OCI-LY7 (cell line): ENCODE measurements at regions of chr14 and their contacts with region 1.

Region 1: GRCh38 chr14:24160850-24161804 is at the start of gene IRF9:
- DNase-seq: peak; percentile 95
- H3K4me3 ChIP-seq: peak within 1 kb of the TSS; percentile 70
- H3K27ac ChIP-seq: peak within 1 kb of the TSS; percentile 68
- H3K4me1 ChIP-seq: peaks cover 16% of the 10 kb centered on the region
- CTCF ChIP-seq: peak; percentile 95
- total RNA-seq, gene IRF9: 35.1 and 40.7 TPM in 2 replicates

Region 2: GRCh38 chr14:24013654-24014514 is 147.2 kb before region 1 on chr14:
- CTCF ChIA-PET with region 1: no interaction called
- POLR2A ChIA-PET with region 1: no interaction called
- intact Hi-C with region 1: loop called (anchors 1 kb)
- DNase-seq: peak; percentile 82
- H3K4me3 ChIP-seq: no peak overlapping the region
- H3K27ac ChIP-seq: no peak overlapping the region
- H3K4me1 ChIP-seq: peaks cover 12% of the 10 kb centered on the region
- CTCF ChIP-seq: peak; percentile 90

Region 3: GRCh38 chr14:24114536-24115450 is 46.3 kb before region 1 on chr14 and contains the starts of genes DCAF11 and NRL:
- CTCF ChIA-PET with region 1: interaction called, 6 read pairs
- POLR2A ChIA-PET with region 1: interaction called, 3 read pairs
- intact Hi-C with region 1: loop called (anchors 1 kb)
- DNase-seq: peak; percentile 99
- H3K4me3 ChIP-seq: peak within 1 kb of the TSS; percentile 91
- H3K27ac ChIP-seq: peak within 1 kb of the TSS; percentile 93
- H3K4me1 ChIP-seq: peaks cover 15% of the 10 kb centered on the region
- CTCF ChIP-seq: no peak
- total RNA-seq, gene DCAF11: 75.5 and 79.2 TPM in 2 replicates
- total RNA-seq, gene NRL: 3.1 and 4.6 TPM in 2 replicates

Region 4: DNA sequence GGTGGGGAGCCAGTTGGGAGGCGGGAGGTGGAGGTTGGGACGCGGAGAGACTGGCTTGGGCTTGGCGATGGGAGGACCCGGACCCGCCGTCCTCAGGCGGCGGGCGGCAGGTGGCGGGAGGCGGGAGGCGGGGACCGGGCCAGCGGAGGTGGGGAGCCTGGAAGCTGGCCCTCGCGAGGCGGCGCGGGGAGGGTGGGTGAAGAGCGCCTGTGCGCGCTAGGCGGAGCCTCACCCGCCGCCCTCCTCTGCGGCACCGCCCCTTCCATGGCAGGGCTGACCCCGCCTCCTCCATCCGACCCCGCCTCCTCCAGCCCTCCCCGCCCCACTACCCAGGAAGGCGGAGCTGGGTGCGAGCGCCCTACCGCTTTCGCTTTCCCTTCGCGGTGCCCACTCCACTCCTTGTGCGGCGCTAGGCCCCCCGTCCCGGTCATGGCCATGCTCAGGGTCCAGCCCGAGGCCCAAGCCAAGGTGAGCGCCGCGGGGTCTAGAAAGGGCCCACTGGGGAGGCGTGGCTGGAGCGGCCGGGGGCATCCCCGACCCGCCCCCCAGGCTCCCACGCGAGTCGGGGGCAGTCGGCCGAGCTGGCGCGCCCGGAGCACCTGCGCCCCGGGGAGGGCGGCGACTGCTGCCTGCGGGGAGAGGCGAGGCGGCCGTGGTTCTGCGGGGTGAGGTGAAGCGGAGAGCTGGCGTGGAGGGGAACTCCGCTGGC is 25.1 kb before region 1 on chr14 and contains the start of gene PSME1:
- CTCF ChIA-PET with region 1: interaction called, 5 read pairs
- POLR2A ChIA-PET with region 1: interaction called, 3 read pairs
- intact Hi-C with region 1: loop called (anchors 1 kb)
- DNase-seq: peak; percentile 93
- H3K4me3 ChIP-seq: peak within 1 kb of the TSS; percentile 98
- H3K27ac ChIP-seq: peak within 1 kb of the TSS; percentile 46
- H3K4me1 ChIP-seq: peaks cover 40% of the 10 kb centered on the region
- CTCF ChIP-seq: no peak
- total RNA-seq, gene PSME1: 187 and 213 TPM in 2 replicates

Region 5: DNA sequence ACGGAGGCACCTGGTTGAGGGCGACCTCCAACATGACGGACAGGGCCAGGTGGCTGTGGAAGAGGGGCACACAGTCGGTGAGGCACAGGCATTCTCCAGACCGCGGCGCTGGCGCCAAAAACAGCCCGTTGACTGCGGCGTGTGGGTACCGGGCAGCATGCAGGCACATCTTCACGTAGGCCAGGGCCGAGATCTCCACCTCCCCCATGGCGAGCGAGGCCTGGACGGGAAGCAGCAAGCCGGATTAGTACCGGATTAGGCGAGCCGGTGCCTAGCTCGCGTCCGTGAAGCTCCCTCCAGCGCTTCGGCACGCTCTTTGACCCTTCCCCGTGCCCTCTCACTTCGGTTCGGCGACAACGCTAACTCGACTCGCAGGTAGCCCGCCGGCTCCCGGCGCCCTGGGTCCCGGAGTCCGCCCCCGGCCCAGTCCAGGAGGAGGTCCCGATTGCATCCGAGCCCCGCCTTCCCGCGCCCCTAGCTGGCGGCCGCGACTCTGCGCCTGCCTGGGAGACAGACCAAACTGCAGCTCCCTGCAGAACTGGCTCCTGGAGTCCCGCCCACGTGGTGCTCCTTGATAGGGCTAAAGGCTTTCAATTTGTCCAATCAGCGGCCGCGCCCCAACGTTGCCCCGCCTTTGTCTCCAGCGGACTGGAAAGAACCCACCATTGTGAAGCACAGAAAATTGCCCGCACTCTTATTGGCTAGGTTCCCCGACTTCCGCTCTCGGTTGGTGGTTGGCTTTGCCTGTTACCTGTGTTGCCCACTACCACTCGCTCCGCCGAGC is 19.8 kb before region 1 on chr14 and contains the start of gene EMC9:
- CTCF ChIA-PET with region 1: interaction called, 5 read pairs
- POLR2A ChIA-PET with region 1: interaction called, 15 read pairs
- intact Hi-C with region 1: loop called (anchors 1 kb)
- DNase-seq: peak; percentile 100
- H3K4me3 ChIP-seq: peak within 1 kb of the TSS; percentile 85
- H3K27ac ChIP-seq: peak within 1 kb of the TSS; percentile 81
- H3K4me1 ChIP-seq: peaks cover 44% of the 10 kb centered on the region
- CTCF ChIP-seq: peak; percentile 51
- total RNA-seq, gene EMC9: 73.2 and 74.8 TPM in 2 replicates

Region 6: DNA sequence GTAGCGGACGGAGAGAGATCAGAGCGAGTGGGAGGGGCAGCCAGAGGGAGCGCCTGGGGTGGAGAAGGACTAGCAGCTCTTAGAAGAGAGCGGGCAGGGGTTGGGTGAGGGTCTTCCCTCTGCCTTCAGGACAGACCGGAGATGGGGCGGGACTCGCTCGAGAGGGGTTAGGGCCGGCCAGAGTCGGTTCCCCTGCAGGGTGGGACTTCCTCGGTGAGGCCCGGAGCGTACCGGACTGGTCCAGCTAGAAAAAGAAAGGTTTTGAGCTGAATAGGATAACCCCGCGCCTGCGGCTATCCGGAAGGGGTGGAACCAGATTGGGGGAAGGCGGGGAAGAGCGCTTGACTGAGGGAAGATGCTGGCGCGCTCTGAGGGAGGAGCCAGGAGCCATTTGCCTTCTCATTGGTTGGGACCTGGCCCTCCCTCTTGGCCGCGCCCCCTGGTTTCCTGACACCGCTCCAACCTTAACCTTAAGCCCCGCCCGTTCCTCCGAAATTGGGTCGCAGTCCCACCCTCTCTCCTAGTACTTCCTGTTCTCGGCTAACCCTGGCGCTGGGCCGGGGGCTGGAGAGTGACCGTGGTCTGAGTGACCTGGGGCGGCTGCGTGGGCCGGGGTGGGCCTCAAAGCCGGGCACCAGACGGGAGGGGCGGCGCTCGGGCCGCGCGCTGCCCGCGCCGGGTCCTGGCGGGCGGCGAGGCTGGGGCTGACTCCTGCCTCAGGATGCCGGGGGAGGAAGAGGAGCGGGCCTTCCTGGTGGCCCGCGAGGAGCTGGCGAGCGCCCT is 14.0 kb before region 1 on chr14 and contains the start of gene RNF31:
- CTCF ChIA-PET with region 1: interaction called, 6 read pairs
- POLR2A ChIA-PET with region 1: interaction called, 15 read pairs
- intact Hi-C with region 1: loop called (anchors 1 kb)
- DNase-seq: peak; percentile 99
- H3K4me3 ChIP-seq: peak within 1 kb of the TSS; percentile 94
- H3K27ac ChIP-seq: peak within 1 kb of the TSS; percentile 82
- H3K4me1 ChIP-seq: peaks cover 20% of the 10 kb centered on the region
- CTCF ChIP-seq: no peak
- total RNA-seq, gene RNF31: 37.8 and 66.1 TPM in 2 replicates

Region 7: DNA sequence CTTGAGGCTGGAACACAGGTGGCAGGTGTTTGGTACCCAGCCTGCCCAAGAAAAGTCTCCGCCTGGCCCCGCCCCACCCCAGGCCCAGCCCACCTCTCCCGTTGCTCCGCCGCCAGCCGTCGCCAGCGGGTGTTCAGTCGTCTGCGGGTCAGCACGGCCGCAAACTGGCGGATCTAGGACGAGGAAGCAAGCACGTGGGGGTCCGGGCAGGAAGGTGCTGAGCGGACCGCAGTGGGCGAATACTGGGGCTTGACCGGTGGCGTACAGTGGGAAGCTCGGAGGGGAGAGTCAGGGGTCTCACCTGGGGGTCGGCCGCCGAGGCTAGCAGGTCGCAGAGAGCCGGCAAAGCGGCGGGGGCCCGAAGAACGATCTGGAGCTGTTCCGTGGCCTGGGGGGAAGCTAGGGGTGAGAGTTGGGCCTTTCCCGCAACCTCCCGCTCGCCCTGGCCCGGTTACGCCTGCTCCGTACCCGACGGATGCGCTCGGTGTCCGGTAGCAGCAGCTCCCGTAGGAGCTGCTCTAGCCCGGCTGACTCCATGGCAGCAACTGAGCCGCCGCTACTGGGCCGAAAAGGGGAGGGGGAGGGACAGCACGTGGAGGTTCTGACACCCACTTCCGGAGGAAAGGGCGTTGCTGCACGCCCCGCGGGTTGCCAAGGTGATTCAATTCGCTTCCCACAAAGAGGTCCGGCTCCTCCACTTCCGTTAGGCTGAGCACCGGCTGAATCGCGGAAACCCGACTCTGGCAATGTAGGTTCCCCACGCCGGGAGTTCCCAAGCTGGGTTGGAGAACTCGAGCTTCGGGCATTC is 27.3 kb after region 1 on chr14 and contains the start of gene IPO4:
- CTCF ChIA-PET with region 1: no interaction called
- POLR2A ChIA-PET with region 1: interaction called, 5 read pairs
- intact Hi-C with region 1: loop called (anchors 2 kb)
- DNase-seq: peak; percentile 97
- H3K4me3 ChIP-seq: peak within 1 kb of the TSS; percentile 85
- H3K27ac ChIP-seq: peak within 1 kb of the TSS; percentile 26
- H3K4me1 ChIP-seq: peaks cover 16% of the 10 kb centered on the region
- CTCF ChIP-seq: no peak
- total RNA-seq, gene IPO4: 48.4 and 59.2 TPM in 2 replicates

Region 8: GRCh38 chr14:24310646-24311604 is 149.8 kb after region 1 on chr14 and contains the start of gene LTB4R:
- CTCF ChIA-PET with region 1: no interaction called
- POLR2A ChIA-PET with region 1: no interaction called
- intact Hi-C with region 1: no loop called
- DNase-seq: peak; percentile 70
- H3K4me3 ChIP-seq: no peak within 1 kb of the TSS
- H3K27ac ChIP-seq: no peak within 1 kb of the TSS
- H3K4me1 ChIP-seq: peaks cover 38% of the 10 kb centered on the region
- CTCF ChIP-seq: peak; percentile 30; the same call in 1 of the 2 replicates
- total RNA-seq, gene LTB4R: 15.8 and 17.9 TPM in 2 replicates

Region 9: GRCh38 chr14:24398653-24399446 is 237.7 kb after region 1 on chr14 and contains the start of gene NYNRIN:
- CTCF ChIA-PET with region 1: no interaction called
- POLR2A ChIA-PET with region 1: no interaction called
- intact Hi-C with region 1: no loop called
- DNase-seq: no peak
- H3K4me3 ChIP-seq: no peak within 1 kb of the TSS
- H3K27ac ChIP-seq: no peak within 1 kb of the TSS
- H3K4me1 ChIP-seq: no peaks in the 10 kb centered on the region
- CTCF ChIP-seq: no peak
- total RNA-seq, gene NYNRIN: 0.13 TPM in 2 replicates